HepG2 (cell line): ENCODE measurements at regions of chr2 and their contacts with region 1.

Region 1: GRCh38 chr2:41869542-41870264 is 178.1 kb upstream of the PKDCC start:
- DNase-seq: peak; percentile 59
- ATAC-seq: peak; percentile 95
- H3K4me3 ChIP-seq: no peak overlapping the region
- H3K27ac ChIP-seq: no peak overlapping the region
- H3K4me1 ChIP-seq: peaks cover 24% of the 10 kb centered on the region
- H3K27me3 ChIP-seq: peaks cover 2 to 30% of the 10 kb centered on the region in 2 experiments; a peak in 2 of 5 replicates
- CTCF ChIP-seq: peak; percentile 94
- EP300 ChIP-seq: no peak
- POLR2A ChIP-seq: no peak
- RAD21 ChIP-seq: peak; percentile 98

Region 2: DNA sequence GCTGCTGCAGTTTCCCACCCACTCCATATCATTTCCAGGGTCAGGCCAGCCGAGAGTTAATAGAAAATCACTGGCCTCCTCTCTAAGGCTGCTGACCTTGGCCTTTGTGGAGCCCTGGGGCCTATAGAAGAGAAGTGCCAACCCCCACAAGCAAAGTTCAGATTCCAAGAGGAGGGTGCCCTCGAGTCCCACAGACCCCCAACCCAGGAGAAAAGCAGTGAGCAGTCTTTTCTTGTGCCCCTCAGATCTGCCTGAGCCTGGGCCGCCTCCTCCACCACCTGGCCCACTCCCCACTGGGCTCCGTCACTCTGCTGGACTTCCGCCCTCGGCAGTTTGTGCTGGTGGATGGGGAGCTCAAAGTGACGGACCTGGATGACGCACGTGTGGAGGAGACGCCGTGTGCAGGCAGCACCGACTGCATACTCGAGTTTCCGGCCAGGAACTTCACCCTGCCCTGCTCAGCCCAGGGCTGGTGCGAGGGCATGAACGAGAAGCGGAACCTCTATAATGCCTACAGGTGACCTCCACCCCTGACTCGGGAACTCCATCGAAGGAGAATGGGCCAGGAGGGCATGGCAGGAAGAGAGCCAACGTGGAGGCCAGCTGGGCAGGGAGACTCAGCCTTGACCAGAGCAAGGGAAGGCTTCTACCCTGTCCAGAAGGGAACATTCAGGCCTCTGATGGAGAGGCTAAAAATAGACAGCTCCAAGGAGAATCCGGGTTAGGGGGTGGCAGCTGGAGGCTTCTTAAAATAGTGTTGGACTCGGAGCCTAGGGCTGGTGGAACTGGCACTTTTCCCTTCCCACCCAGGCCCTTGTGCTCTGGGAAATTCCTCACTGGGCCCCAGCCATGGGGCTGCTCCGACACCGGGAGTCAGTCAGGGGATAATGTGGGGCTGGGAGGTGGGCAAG is 184.3 kb after region 1 on chr2:
- CTCF ChIA-PET with region 1: no interaction called
- POLR2A ChIA-PET with region 1: interaction called, 10 read pairs
- in situ Hi-C with region 1: no loop called
- intact Hi-C with region 1: no loop called
- DNase-seq: peak; percentile 55
- ATAC-seq: peak; percentile 28
- H3K4me3 ChIP-seq: peak overlapping the region in 1 of 3 experiments; percentile 32; a peak in 2 of 6 replicates
- H3K27ac ChIP-seq: peak overlapping the region; percentile 39
- H3K4me1 ChIP-seq: peaks cover 91% of the 10 kb centered on the region
- H3K27me3 ChIP-seq: peaks cover 0 to under 1% of the 10 kb centered on the region in 2 experiments; a peak in 1 of 5 replicates
- CTCF ChIP-seq: 0 out of 2 replicates have a peak, but pooled peaks have one; percentile 8
- EP300 ChIP-seq: peak in 1 of 2 experiments; percentile 75; a peak in 2 of 4 replicates
- POLR2A ChIP-seq: no peak
- RAD21 ChIP-seq: no peak

Region 3: DNA sequence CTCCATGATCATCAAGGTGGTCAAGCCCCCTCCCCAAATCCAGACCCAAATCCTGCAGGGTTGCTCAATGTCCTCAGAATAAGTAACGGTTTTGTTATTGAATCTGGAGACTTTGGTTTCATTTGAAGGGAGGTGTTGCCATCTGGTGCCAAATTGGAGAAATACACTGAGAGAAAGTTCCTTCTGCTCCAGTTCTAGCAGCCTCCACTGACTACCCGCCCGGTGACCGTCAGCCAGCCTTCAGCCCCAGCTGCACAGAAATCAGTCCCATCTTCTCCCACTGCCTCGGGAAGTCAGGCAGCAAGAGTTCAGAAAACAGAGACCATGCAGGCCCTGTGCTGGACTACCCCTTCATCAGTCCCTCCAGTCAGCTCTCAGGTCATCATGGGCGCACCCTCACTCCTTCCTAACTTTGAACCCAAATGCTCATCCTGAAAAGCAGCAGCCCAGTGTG is 216.8 kb after region 1 on chr2:
- CTCF ChIA-PET with region 1: interaction called, 119 read pairs
- POLR2A ChIA-PET with region 1: interaction called, 5 read pairs
- in situ Hi-C with region 1: loop called (anchors 5 kb)
- intact Hi-C with region 1: loop called (anchors 1 kb)
- DNase-seq: peak; percentile 76
- ATAC-seq: peak; percentile 89
- H3K4me3 ChIP-seq: peak overlapping the region; percentile 6 to 51 (median 20); a peak in 3 of 6 replicates
- H3K27ac ChIP-seq: no peak overlapping the region
- H3K4me1 ChIP-seq: peaks cover 65% of the 10 kb centered on the region
- H3K27me3 ChIP-seq: peaks cover 0 to 6% of the 10 kb centered on the region in 2 experiments; a peak in 1 of 5 replicates
- CTCF ChIP-seq: peak; percentile 94
- EP300 ChIP-seq: no peak
- POLR2A ChIP-seq: no peak
- RAD21 ChIP-seq: peak; percentile 97

Region 4: GRCh38 chr2:42238644-42239288 is 369.1 kb after region 1 on chr2:
- CTCF ChIA-PET with region 1: no interaction called
- POLR2A ChIA-PET with region 1: no interaction called
- in situ Hi-C with region 1: no loop called
- intact Hi-C with region 1: loop called (anchors 5 kb)
- DNase-seq: peak; percentile 53
- ATAC-seq: peak; percentile 77
- H3K4me3 ChIP-seq: no peak overlapping the region
- H3K27ac ChIP-seq: no peak overlapping the region
- H3K4me1 ChIP-seq: peaks cover 100% of the 10 kb centered on the region
- H3K27me3 ChIP-seq: no peaks in the 10 kb centered on the region
- CTCF ChIP-seq: peak; percentile 76
- EP300 ChIP-seq: no peak
- POLR2A ChIP-seq: peak; percentile 25 to 33; a peak in 1 of 4 replicates
- RAD21 ChIP-seq: peak; percentile 70

Region 5: DNA sequence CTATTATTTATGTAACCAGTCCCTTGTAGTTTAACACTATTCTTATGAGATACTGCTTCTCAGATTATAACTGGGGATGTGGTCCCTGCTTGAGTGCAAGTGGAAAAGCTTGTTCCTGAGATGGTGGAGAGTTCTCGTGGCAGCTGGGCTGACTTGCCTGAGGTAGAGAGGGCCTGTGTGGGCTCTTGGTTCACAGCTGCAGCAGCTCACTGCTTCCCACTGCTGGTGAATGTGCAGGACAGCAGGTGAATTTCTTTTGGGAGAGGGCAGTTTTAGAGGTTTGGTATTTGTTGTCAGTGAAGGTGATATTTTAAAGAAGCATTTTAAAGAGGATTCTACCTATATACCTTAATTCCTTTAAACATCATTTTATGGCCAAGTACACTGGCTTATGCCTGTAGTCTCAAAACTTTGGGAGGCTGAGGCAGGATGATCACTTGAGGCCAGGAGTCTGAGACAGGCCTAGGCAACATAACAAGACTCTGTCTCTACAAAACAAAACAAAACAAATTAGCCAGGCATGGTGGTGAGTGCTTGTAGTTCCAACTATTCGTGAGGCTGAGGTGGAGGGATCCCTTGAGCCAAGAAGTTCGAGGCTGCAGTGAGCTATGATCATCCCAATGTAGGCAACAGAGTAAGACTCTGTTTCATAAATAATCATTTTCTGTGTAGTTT is 793.5 kb after region 1 on chr2:
- CTCF ChIA-PET with region 1: no interaction called
- POLR2A ChIA-PET with region 1: no interaction called
- in situ Hi-C with region 1: loop called (anchors 25 kb)
- intact Hi-C with region 1: no loop called
- DNase-seq: peak; percentile 80
- ATAC-seq: peak; percentile 98
- H3K4me3 ChIP-seq: no peak overlapping the region
- H3K27ac ChIP-seq: no peak overlapping the region
- H3K4me1 ChIP-seq: peaks cover 4% of the 10 kb centered on the region; the same call in 1 of the 2 replicates
- H3K27me3 ChIP-seq: no peaks in the 10 kb centered on the region
- CTCF ChIP-seq: peak; percentile 97
- EP300 ChIP-seq: no peak
- POLR2A ChIP-seq: no peak
- RAD21 ChIP-seq: peak; percentile 95